ENCODE measurements at regions of chr6 and their contacts with region 1.

Region 1: DNA sequence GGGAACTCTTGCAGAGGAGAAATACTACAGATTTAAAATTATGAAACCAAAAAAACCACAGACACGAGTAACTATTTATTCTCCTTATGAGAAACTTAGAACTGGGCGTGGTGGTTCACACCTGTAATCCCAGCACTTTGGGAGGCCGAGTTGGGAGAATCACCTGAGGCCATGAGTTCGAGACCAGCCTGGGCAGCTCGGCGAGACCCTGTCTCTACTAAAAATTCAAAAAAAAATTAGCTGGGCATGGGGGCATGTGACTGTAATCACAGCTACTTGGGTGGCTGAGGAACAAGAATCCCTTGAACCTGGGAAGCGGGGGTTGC is 36.8 kb downstream of the SSR1 start:
- DNase-seq: no peak
- ATAC-seq: no peak
- H3K4me3 Mint-ChIP-seq: no peak overlapping the region
- H3K27ac Mint-ChIP-seq: no peak overlapping the region
- H3K4me1 Mint-ChIP-seq: no peaks in the 10 kb centered on the region
- H3K27me3 Mint-ChIP-seq: no peaks in the 10 kb centered on the region
- CTCF ChIP-seq: peak; percentile 49

Region 2: DNA sequence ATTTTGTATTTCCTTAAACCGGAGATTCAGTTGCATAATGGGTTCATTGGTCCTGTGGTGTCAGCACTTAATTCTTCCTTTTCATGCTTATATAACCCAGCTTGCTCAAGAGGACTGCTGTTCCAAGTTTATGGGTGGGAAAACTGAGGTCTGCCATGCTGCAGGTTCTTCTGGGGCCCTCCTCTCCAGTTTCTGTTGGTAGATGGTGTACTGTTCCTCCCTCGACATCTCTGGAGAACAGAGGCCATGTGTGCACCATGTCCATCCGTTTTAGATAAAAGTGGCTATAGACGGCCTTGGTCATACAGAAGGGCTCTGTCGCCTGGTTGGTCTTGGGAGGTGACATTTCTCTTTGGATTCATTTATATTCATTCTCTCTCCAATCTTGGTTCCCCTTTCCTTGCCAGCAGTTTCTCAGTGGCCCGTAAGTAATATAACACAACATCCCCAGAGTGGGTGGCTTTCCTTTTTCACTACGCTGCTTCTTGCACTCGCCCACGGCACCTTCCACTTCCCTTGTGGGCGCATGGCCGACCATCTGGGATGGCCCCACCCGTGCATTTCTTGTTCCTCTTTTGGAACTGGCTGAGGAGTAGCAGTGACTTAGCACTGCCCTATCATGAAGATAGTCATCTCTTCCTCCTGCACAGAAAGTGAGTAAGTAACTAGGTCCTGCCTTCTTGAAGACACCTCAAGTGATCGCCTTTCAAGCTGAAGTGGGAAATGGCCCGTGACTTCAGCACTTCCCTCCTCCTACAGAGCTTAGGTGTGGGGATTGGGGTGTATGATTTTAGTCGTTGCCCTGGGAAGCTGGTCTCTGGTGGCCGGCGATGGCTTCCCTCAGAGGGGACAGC is 74.2 kb before region 1 on chr6:
- CTCF ChIA-PET with region 1: no interaction called
- POLR2A ChIA-PET with region 1: no interaction called
- intact Hi-C with region 1: no loop called
- DNase-seq: peak; percentile 36
- ATAC-seq: peak; percentile 72
- H3K4me3 Mint-ChIP-seq: no peak overlapping the region
- H3K27ac Mint-ChIP-seq: peak overlapping the region; percentile 69
- H3K4me1 Mint-ChIP-seq: peaks cover 23% of the 10 kb centered on the region
- H3K27me3 Mint-ChIP-seq: no peaks in the 10 kb centered on the region
- CTCF ChIP-seq: no peak

Region 3: GRCh38 chr6:7246401-7247178 is 29.6 kb before region 1 on chr6:
- CTCF ChIA-PET with region 1: no interaction called
- POLR2A ChIA-PET with region 1: no interaction called
- intact Hi-C with region 1: no loop called
- DNase-seq: no peak
- ATAC-seq: no peak
- H3K4me3 Mint-ChIP-seq: no peak overlapping the region
- H3K27ac Mint-ChIP-seq: no peak overlapping the region
- H3K4me1 Mint-ChIP-seq: peaks cover 17% of the 10 kb centered on the region
- H3K27me3 Mint-ChIP-seq: no peaks in the 10 kb centered on the region
- CTCF ChIP-seq: no peak

Region 4: GRCh38 chr6:7292596-7293255 is 16.6 kb after region 1 on chr6:
- CTCF ChIA-PET with region 1: interaction called, 30 read pairs
- POLR2A ChIA-PET with region 1: no interaction called
- intact Hi-C with region 1: no loop called
- DNase-seq: no peak
- ATAC-seq: no peak
- H3K4me3 Mint-ChIP-seq: no peak overlapping the region
- H3K27ac Mint-ChIP-seq: peak overlapping the region; percentile 21
- H3K4me1 Mint-ChIP-seq: peaks cover 4% of the 10 kb centered on the region
- H3K27me3 Mint-ChIP-seq: no peaks in the 10 kb centered on the region
- CTCF ChIP-seq: no peak

Region 5: DNA sequence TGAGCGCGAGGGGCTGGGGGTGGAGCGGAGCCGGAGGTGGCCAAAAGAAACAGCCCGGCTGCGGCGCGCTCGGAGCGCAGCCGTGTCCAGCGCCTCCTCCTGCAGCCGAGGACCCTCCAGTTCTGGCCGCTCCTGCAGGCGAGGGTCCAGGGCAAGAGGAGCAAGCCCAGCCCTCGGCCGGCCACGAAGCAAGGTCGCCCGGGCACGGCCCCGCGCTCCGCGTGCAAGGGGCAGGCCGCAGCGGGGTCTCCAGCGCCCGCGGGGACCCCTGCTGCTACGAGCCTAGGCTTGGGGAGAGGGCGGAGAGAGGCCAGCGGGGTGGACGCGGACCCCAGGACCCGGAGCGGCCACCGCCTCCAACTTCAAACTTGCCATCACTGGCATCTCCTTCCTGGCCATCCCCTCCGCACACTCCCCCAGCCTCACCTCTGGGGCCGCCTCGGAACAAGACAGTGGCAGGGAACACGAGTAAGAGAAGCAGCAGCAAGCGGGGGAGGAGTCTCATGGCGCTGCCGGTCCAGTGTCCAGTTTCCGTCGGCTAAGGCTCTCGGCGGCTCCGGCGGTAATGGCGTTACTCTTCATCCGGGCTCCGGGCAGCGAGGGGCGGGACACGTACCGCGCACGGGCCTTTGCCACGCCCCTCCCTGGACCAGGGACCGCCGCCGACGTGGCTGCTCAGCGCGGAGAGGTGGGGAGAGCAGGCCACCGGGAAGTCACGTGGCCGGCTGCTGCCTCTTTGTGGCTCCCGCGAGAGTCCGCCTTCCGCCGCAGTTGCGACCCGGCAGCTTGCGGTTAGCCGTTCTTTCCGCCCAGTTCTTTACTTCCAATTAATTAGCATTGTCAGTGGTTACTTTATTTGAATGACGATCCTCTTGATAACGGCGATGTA is 36.7 kb after region 1 on chr6 and contains the start of gene SSR1:
- CTCF ChIA-PET with region 1: interaction called, 11 read pairs
- POLR2A ChIA-PET with region 1: no interaction called
- intact Hi-C with region 1: no loop called
- DNase-seq: peak; percentile 97
- ATAC-seq: peak; percentile 98
- H3K4me3 Mint-ChIP-seq: peak within 1 kb of the TSS; percentile 94
- H3K27ac Mint-ChIP-seq: peak within 1 kb of the TSS; percentile 92
- H3K4me1 Mint-ChIP-seq: peaks cover 45% of the 10 kb centered on the region
- H3K27me3 Mint-ChIP-seq: no peaks in the 10 kb centered on the region
- CTCF ChIP-seq: no peak
- total RNA-seq, gene SSR1: 117 to 124 TPM

Region 6: GRCh38 chr6:7414811-7415210 is 138.6 kb after region 1 on chr6:
- CTCF ChIA-PET with region 1: interaction called, 3 read pairs
- POLR2A ChIA-PET with region 1: no interaction called
- intact Hi-C with region 1: loop called (anchors 5 kb)
- DNase-seq: no peak
- ATAC-seq: no peak
- H3K4me3 Mint-ChIP-seq: no peak overlapping the region
- H3K27ac Mint-ChIP-seq: no peak overlapping the region
- H3K4me1 Mint-ChIP-seq: no peaks in the 10 kb centered on the region
- H3K27me3 Mint-ChIP-seq: no peaks in the 10 kb centered on the region
- CTCF ChIP-seq: no peak